BJ (cell line): ENCODE measurements at regions of chr19 and their contacts with region 1.

Region 1: GRCh38 chr19:13861732-13862531 is 15.0 kb upstream of the NANOS3 start:
- DNase-seq: peak; percentile 80
- H3K4me3 ChIP-seq: peak overlapping the region; percentile 42
- H3K27me3 ChIP-seq: no peaks in the 10 kb centered on the region
- CTCF ChIP-seq: peak; percentile 94

Region 2: DNA sequence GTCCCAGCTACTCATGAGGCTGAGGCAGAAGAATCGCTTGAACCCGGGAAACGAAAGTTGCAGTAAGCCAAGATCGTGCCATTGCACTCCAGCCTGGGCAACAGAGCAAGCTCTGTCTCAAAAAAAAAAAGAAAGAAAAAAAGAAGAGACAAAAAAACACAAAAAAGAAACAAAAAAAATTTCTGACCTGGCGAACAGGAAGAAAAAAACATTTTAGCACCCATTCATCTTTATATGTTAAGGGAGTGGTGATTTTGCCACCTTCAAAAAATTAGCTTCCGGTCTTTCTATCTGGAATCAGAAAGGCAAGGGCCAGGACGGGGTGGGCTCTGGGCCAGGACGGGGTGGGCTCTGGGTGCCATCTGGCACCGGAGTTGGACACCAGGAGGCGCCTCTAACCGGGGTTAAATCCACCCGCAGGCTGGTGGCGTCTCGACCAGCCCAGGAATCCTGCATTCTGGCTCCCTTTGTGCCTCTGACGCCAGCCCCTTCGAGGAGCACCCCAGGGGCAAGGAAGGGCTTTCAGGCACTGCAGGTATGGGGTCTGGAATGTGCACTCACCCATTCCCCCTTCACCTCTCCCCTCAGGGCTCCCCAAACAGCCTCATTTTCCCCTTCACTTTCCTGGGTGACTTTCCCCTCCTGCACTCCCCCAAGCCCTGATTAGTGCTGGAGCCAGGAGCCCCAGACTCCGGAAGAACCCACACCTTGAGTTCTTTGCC is 77.0 kb before region 1 on chr19:
- CTCF ChIA-PET with region 1: interaction called, 61 read pairs
- POLR2A ChIA-PET with region 1: interaction called, 12 read pairs
- DNase-seq: no peak
- H3K4me3 ChIP-seq: no peak overlapping the region
- H3K27me3 ChIP-seq: no peaks in the 10 kb centered on the region
- CTCF ChIP-seq: peak; percentile 83

Region 3: GRCh38 chr19:13825489-13826391 is 36.2 kb before region 1 on chr19:
- CTCF ChIA-PET with region 1: interaction called, 25 read pairs
- POLR2A ChIA-PET with region 1: no interaction called
- DNase-seq: no peak
- H3K4me3 ChIP-seq: no peak overlapping the region
- H3K27me3 ChIP-seq: no peaks in the 10 kb centered on the region
- CTCF ChIP-seq: peak; percentile 6; the same call in 1 of the 2 replicates

Region 4: DNA sequence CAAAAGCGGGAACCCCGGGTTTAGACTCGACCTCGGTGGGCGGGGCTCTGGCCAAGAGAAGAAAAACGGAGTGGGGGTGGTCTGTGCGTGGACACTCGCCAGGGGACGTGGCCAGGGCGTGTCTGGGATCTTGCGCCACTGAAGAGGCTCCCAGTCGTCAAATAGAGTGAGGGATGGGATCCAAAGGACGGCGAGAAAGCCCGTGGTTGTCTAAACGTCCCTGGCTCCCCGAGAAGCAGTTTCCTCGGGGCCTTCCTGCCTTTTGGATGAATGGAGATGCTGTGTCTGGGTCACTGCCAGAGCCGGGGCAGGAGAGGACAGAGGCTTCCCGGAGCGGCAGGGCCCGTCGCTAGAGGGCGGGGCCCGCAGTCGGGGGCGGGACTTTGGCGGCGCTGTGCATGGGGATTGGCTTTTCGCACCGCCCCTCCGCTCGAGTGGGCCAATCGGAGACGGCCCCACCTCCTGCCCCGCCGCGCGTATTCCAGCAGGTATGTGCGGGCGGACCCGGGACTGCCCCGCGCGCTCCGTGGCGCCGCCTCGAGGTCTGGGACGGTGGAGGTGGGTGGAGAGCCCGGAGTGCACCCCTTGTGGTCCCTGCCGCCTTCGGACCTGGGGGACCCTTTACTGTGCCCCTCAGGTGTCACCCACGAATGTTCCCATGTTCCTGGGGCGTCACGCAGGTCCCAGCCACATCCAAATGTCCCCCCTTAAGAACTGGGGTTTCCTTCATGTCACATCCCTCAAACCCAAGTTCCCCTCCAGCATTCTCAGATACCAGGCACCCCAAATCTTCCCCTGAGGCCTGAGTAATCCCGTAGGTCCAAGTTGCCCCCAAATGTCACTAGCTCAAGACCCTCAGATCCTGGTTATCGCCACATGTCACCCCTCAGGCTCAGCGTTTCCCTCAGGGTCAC is 28.3 kb before region 1 on chr19:
- CTCF ChIA-PET with region 1: interaction called, 64 read pairs
- POLR2A ChIA-PET with region 1: interaction called, 3 read pairs
- DNase-seq: no peak
- H3K4me3 ChIP-seq: no peak overlapping the region
- H3K27me3 ChIP-seq: no peaks in the 10 kb centered on the region
- CTCF ChIP-seq: peak; percentile 66

Region 5: GRCh38 chr19:13847407-13848339 is 14.3 kb before region 1 on chr19:
- CTCF ChIA-PET with region 1: interaction called, 10 read pairs
- POLR2A ChIA-PET with region 1: interaction called, 8 read pairs
- DNase-seq: no peak
- H3K4me3 ChIP-seq: peak overlapping the region; percentile 63
- H3K27me3 ChIP-seq: no peaks in the 10 kb centered on the region
- CTCF ChIP-seq: peak; percentile 24; the same call in 1 of the 2 replicates

Region 6: GRCh38 chr19:13987101-13987890 is 125.4 kb after region 1 on chr19:
- CTCF ChIA-PET with region 1: no interaction called
- POLR2A ChIA-PET with region 1: no interaction called
- DNase-seq: no peak
- H3K4me3 ChIP-seq: no peak overlapping the region
- H3K27me3 ChIP-seq: no peaks in the 10 kb centered on the region
- CTCF ChIP-seq: no peak